CD8-positive, alpha-beta T cell (primary cell): ENCODE measurements at regions of chr2 and their contacts with region 1.

Region 1: DNA sequence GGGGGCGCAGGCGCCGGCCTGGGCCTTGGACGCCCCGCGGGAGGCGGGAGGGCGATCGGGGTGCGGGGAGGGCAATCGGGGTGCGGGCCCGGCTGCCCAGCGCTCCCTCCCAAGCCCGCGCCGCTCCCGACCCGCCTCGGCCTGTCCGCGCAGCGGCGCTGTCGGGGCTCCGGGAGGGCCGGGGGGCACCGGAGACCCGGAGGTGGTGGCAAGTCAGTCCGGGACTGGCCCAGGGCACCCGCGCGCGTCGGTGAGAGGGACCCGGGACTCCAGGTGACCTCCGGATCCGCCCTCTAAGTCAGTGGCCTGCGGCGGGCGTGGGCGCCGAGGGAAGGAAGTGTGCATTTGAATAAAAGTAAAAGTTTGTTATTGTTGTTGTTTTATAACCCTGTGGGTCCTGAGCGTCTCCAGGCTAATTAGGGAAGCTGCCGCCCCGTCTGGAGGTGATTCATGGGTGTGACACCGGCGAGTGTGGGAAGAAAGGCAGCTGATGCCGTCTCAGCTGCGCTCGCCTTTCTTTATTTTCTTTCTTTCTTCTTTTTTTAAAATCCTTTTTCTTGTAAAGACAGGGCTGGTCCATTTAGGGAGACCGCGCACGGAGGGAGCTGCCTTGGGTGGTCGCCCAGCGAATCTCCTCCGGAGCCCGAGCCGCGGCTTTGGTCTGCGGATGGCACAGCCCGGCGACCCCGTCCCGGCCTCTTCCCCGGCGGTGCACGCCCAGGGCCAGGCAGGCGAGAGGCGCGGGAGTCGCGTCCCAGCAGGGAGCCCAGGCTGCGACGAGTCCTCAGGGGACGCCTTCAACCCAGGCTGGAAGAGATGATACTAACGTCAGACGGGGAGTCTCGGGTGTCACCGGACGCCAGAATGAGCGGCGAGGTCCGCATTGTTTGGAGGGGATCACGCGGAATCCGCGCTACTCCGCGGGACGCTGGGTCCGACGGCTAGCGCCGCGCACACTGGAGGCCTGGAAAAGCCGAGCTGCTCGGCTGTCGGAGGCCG is 627 bp upstream of the CRACDL start:
- DNase-seq: peak in 1 of 9 experiments; percentile 22
- ATAC-seq: peak; percentile 38
- H3K4me3 ChIP-seq: peak overlapping the region; percentile 12 to 34
- H3K4me3 Mint-ChIP-seq: peak overlapping the region; percentile 81
- H3K27ac ChIP-seq: no peak overlapping the region
- H3K27ac Mint-ChIP-seq: no peak overlapping the region
- H3K4me1 ChIP-seq: peaks cover 9% of the 10 kb centered on the region
- H3K4me1 Mint-ChIP-seq: peaks cover 13% of the 10 kb centered on the region
- H3K27me3 ChIP-seq: peaks cover 3 to 9% of the 10 kb centered on the region in 2 experiments
- H3K27me3 Mint-ChIP-seq: peaks cover 52% of the 10 kb centered on the region
- CTCF ChIP-seq: no peak

Region 2: DNA sequence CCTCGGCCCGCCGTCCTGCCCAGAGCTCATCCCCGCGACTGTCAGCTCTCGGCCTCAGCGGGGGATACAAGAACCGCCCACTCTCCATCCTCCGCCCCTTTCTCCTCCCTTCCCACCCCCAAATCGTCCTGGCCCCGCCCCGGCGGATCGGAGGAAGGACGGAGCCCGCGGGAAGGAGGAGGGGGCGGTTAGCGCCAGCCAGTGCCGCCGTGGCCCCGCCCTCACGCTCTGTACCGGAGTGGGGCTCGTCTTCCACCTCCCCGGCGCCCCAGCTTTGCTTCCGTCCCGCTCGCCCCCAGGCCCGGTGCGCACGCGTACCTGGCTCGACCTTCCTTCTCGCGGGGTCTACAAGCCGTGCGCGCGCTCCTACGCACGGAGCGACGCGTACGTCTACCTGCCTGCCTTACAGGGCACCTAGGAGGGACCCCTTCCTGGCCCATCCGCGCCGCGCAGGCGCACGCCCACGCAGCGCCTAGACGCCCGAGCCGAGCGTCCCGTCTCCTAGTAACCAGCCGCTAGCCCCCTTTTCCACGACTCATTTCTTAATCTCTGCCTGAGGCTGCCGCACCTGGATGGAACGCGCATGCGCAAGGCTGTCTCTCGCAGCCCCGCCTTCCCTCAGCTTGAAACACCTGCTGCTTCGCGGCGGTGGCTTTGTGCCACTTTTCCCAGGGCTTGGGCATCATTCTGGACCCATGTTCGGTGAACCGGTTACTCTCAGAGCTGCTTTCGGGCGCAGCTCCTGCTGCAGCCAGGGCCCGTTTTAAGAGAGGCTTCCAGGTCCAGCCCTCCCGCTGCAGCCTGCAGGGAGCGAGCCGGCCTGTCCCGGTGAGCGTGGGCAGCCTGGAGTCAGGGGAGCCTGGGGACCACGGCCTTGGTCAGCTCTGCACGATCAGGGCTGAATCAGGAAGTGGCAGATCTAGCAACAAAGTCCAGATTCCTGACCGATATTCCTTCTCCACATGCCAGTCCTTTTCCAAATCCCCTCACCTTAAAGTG is 204.8 kb after region 1 on chr2 and contains the start of gene C2orf15:
- CTCF ChIA-PET with region 1: no interaction called
- POLR2A ChIA-PET with region 1: no interaction called
- intact Hi-C with region 1: no loop called
- DNase-seq: peak; percentile 91 to 98 (median 97)
- ATAC-seq: peak; percentile 88
- H3K4me3 ChIP-seq: peak within 1 kb of the TSS; percentile 86 to 97
- H3K4me3 Mint-ChIP-seq: peak within 1 kb of the TSS; percentile 88
- H3K27ac ChIP-seq: peak within 1 kb of the TSS; percentile 90 to 91
- H3K27ac Mint-ChIP-seq: peak within 1 kb of the TSS; percentile 96
- H3K4me1 ChIP-seq: peaks cover 14% of the 10 kb centered on the region
- H3K4me1 Mint-ChIP-seq: peaks cover 25% of the 10 kb centered on the region
- H3K27me3 ChIP-seq: no peaks in the 10 kb centered on the region
- H3K27me3 Mint-ChIP-seq: no peaks in the 10 kb centered on the region
- CTCF ChIP-seq: no peak
- total RNA-seq, gene C2orf15: 1.3 to 1.8 TPM

Region 3: GRCh38 chr2:99171377-99172140 is 234.9 kb after region 1 on chr2:
- CTCF ChIA-PET with region 1: no interaction called
- POLR2A ChIA-PET with region 1: no interaction called
- intact Hi-C with region 1: loop called in 1 of 2 experiments (anchors 10 kb)
- DNase-seq: no peak
- ATAC-seq: no peak
- H3K4me3 ChIP-seq: no peak overlapping the region
- H3K4me3 Mint-ChIP-seq: no peak overlapping the region
- H3K27ac ChIP-seq: no peak overlapping the region
- H3K27ac Mint-ChIP-seq: peak overlapping the region; percentile 57
- H3K4me1 ChIP-seq: no peaks in the 10 kb centered on the region
- H3K4me1 Mint-ChIP-seq: peaks cover 32% of the 10 kb centered on the region
- H3K27me3 ChIP-seq: no peaks in the 10 kb centered on the region
- H3K27me3 Mint-ChIP-seq: no peaks in the 10 kb centered on the region
- CTCF ChIP-seq: no peak